ENCODE measurements at regions of chr13 and their contacts with region 1.

Region 1: GRCh38 chr13:33229446-33230177 is 55.9 kb downstream of the STARD13 start:
- DNase-seq: no peak

Region 2: GRCh38 chr13:33251131-33251661 is 21.6 kb after region 1 on chr13:
- intact Hi-C with region 1: no loop called
- DNase-seq: no peak

Region 3: DNA sequence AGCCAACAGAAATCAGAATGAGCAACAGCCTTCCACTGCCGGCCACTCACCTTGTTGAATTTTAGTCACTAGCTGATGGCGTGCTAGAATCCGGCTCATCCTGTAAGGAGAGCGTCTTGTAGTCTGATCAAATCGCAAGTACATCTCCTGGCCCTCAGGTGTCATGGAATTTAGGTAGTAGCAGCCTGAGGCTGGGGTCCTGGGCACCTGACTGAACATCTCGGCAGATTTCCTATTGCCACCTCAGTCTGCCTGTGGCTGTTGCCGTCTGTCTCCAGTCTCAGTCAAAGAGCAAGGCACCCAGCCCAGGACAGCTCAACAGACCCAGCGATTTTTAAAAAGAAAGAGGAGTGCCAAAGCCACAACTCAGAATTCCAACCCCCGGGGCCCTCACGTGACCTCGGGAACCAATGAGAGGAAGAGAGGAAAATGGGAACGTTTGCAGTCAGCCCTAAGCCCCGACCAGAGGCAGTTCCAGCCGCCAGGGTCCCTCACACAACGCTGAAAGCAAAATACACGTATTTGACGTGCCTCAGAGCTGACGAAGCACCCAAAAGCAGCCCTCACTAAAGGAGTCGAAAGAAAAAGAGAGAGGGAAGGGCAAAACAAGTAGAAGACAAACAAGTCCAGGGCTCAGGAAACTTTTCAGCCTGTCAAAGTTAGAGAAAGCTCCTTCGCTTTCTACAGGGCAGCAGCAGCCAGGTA is 56.0 kb after region 1 on chr13 and contains the start of gene STARD13:
- intact Hi-C with region 1: loop called in 1 of 2 experiments (anchors 10 kb)
- DNase-seq: peak; percentile 96
- total RNA-seq, gene STARD13: 34.2 to 36.0 TPM

Region 4: DNA sequence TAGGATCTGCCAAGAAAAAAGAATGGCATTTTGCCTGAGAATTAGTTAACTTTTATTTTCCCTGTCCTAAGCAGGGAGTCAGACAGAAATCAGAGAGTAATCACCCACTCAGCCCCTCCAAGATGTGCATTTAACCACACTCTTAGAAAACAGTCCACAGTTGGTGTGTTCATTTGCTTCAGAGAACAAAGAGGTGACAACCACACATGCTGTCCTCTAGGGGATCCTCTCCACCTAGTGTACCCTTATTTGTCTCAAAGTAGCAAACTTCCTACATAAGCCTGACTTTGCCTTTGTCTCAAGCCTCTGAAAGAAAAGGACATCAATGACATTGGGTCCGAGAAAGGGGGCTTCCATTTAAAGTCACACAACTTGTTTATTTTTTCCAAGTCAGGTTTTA is 481.3 kb after region 1 on chr13:
- intact Hi-C with region 1: loop called in 1 of 2 experiments (anchors 10 kb)
- DNase-seq: no peak

Measured in posterior vena cava (tissue), 2 donors.